PC-3 (cell line): ENCODE measurements at regions of chr5 and their contacts with region 1.

Region 1: GRCh38 chr5:13498113-13498678 is 446.3 kb downstream of the DNAH5 start:
- DNase-seq: peak; percentile 93
- ATAC-seq: peak; percentile 88
- H3K4me3 ChIP-seq: no peak overlapping the region
- H3K27ac ChIP-seq: peak overlapping the region; percentile 88
- H3K4me1 ChIP-seq: peaks cover 52% of the 10 kb centered on the region
- H3K27me3 ChIP-seq: no peaks in the 10 kb centered on the region
- CTCF ChIP-seq: no peak

Region 2: DNA sequence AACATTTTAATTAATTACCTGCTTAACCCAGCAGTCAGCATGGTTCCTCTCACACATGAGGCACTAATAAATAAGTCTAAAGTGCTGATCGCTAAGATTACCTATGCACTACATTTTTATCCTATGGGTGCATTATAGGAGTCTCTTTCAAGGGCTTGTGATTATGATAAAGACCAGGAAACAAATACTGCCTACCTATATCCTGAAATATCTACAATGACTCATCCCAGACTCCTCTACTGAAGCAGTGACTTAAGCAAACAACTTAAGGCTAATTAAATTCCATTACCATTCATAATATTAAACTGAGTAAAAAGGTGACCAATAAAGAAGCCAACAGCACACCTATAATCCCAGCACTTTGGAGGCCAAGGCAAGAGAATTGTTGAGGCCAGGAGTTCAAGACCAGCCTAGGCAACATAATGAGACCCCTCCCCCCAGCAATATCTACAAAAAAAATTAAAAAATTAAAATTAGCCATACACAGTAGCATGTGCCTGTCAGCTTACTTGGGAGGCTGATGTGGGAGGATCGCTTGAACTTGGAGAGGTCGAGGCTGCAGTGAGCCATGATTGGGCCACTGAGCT is 107.9 kb after region 1 on chr5:
- CTCF ChIA-PET with region 1: no interaction called
- POLR2A ChIA-PET with region 1: no interaction called
- intact Hi-C with region 1: loop called (anchors 1 kb)
- DNase-seq: peak; percentile 97
- ATAC-seq: peak; percentile 98
- H3K4me3 ChIP-seq: no peak overlapping the region
- H3K27ac ChIP-seq: peak overlapping the region; percentile 83
- H3K4me1 ChIP-seq: peaks cover 23% of the 10 kb centered on the region
- H3K27me3 ChIP-seq: no peaks in the 10 kb centered on the region
- CTCF ChIP-seq: no peak

Region 3: GRCh38 chr5:13731121-13731628 is 233.0 kb after region 1 on chr5:
- CTCF ChIA-PET with region 1: no interaction called
- POLR2A ChIA-PET with region 1: no interaction called
- intact Hi-C with region 1: loop called (anchors 1 kb)
- DNase-seq: peak; percentile 97
- ATAC-seq: peak; percentile 98
- H3K4me3 ChIP-seq: no peak overlapping the region
- H3K27ac ChIP-seq: peak overlapping the region; percentile 92
- H3K4me1 ChIP-seq: peaks cover 19% of the 10 kb centered on the region
- H3K27me3 ChIP-seq: no peaks in the 10 kb centered on the region
- CTCF ChIP-seq: no peak

Region 4: GRCh38 chr5:13831351-13831750 is 333.2 kb after region 1 on chr5:
- CTCF ChIA-PET with region 1: no interaction called
- POLR2A ChIA-PET with region 1: no interaction called
- intact Hi-C with region 1: loop called (anchors 5 kb)
- DNase-seq: peak; percentile 72
- ATAC-seq: peak; percentile 99
- H3K4me3 ChIP-seq: no peak overlapping the region
- H3K27ac ChIP-seq: no peak overlapping the region
- H3K4me1 ChIP-seq: peaks cover 6% of the 10 kb centered on the region
- H3K27me3 ChIP-seq: no peaks in the 10 kb centered on the region
- CTCF ChIP-seq: peak; percentile 80